HCT116 (cell line): ENCODE measurements at regions of chr11 and their contacts with region 1.

Region 1: GRCh38 chr11:44286268-44286880 is 23.6 kb downstream of the ALX4 start:
- DNase-seq: peak; percentile 43
- ATAC-seq: peak; percentile 94
- H3K4me3 ChIP-seq: no peak overlapping the region
- H3K27ac ChIP-seq: no peak overlapping the region
- H3K4me1 ChIP-seq: no peaks in the 10 kb centered on the region; a peak in 1 of 4 replicates
- H3K27me3 ChIP-seq: no peaks in the 10 kb centered on the region
- CTCF ChIP-seq: peak; percentile 85 to 96 (median 95)
- POLR2A ChIP-seq: no peak
- RAD21 ChIP-seq: peak; percentile 90

Region 2: GRCh38 chr11:43825217-43825816 is 461.1 kb before region 1 on chr11:
- CTCF ChIA-PET with region 1: no interaction called
- POLR2A ChIA-PET with region 1: no interaction called
- RAD21 ChIA-PET with region 1: no interaction called
- intact Hi-C with region 1: no loop called
- DNase-seq: peak; percentile 31
- ATAC-seq: peak; percentile 67
- H3K4me3 ChIP-seq: no peak overlapping the region
- H3K27ac ChIP-seq: no peak overlapping the region
- H3K4me1 ChIP-seq: peaks cover 10% of the 10 kb centered on the region in 2 experiments
- H3K27me3 ChIP-seq: no peaks in the 10 kb centered on the region
- CTCF ChIP-seq: peak; percentile 58 to 83 (median 75); a peak in 5 of 6 replicates
- POLR2A ChIP-seq: no peak
- RAD21 ChIP-seq: peak; percentile 73

Region 3: DNA sequence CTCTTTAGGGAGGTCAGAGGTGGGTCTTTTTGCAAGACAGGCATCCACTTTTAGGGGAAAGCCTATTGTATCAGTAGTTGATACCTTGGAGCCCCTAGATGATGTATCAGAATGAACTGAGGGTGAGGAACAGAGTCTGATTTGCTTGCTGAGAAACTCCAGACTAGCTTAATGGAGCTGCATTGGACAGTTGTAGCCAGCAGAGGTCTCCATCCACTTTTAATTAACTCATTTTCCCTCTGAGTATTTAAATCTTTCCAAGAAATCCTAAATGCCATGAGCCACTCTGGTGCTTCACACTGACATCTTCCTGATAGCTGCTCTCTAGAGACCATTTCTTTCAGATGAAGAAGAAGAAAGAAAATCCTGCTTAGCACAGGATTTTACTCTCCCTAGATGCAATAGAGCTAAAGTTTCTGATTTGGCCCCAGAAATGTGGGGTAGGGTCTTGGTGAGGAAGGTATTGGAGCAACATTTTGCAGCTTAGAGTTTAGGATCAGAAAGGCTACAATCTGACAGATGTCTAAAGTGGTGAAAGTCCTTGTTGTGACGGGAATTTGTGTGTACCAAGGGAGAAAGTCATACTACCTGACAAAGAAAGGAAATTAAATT is 152.9 kb before region 1 on chr11:
- CTCF ChIA-PET with region 1: no interaction called
- POLR2A ChIA-PET with region 1: no interaction called
- RAD21 ChIA-PET with region 1: interaction called in 1 of 2 experiments, 4 read pairs
- intact Hi-C with region 1: loop called (anchors 10 kb)
- DNase-seq: no peak
- ATAC-seq: peak; percentile 76
- H3K4me3 ChIP-seq: no peak overlapping the region
- H3K27ac ChIP-seq: no peak overlapping the region
- H3K4me1 ChIP-seq: no peaks in the 10 kb centered on the region
- H3K27me3 ChIP-seq: no peaks in the 10 kb centered on the region
- CTCF ChIP-seq: peak; percentile 36 to 67 (median 64); a peak in 5 of 6 replicates
- POLR2A ChIP-seq: no peak
- RAD21 ChIP-seq: peak; percentile 58

Region 4: GRCh38 chr11:44372989-44373388 is 86.6 kb after region 1 on chr11:
- CTCF ChIA-PET with region 1: no interaction called
- POLR2A ChIA-PET with region 1: no interaction called
- RAD21 ChIA-PET with region 1: no interaction called
- intact Hi-C with region 1: no loop called
- DNase-seq: no peak
- ATAC-seq: peak; percentile 86
- H3K4me3 ChIP-seq: no peak overlapping the region
- H3K27ac ChIP-seq: no peak overlapping the region
- H3K4me1 ChIP-seq: no peaks in the 10 kb centered on the region
- H3K27me3 ChIP-seq: no peaks in the 10 kb centered on the region
- CTCF ChIP-seq: no peak
- POLR2A ChIP-seq: no peak
- RAD21 ChIP-seq: no peak

Region 5: DNA sequence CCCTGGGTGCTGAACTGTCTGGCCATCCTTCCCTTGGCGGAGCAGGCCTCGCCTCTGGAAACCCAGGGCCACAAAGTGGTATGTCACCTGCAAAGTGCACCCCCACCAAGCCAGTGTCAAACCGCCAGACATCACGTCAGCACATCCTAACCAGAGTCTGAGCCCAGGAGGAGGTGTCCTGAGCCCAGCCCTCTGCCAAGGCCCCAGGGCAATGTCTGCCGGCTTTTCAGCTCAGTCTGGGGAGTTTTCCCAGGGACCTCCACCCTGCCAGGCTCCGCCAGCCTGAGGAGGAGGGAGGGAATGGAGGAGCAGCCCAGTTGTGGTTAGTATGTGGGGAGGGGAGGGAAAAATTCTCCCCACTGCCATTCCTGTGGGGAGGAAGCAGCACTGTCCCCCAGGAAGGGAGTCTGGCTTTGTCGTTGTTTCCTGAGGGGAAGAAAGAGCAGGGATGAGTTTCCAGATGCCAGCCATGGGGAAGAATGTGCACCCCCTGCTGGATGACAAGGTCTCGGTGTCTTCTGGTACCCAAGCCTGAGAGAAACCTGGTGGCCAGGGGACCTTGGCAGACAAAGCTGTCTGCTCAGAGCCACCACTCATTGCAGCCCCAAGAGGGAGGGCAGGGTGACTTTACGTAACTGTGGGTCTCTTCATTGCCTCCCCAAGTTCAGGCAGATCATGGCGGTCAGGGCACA is 197.7 kb after region 1 on chr11:
- CTCF ChIA-PET with region 1: no interaction called
- POLR2A ChIA-PET with region 1: no interaction called
- RAD21 ChIA-PET with region 1: no interaction called
- intact Hi-C with region 1: loop called (anchors 1 kb)
- DNase-seq: peak; percentile 8
- ATAC-seq: peak; percentile 84
- H3K4me3 ChIP-seq: no peak overlapping the region
- H3K27ac ChIP-seq: no peak overlapping the region
- H3K4me1 ChIP-seq: no peaks in the 10 kb centered on the region
- H3K27me3 ChIP-seq: no peaks in the 10 kb centered on the region
- CTCF ChIP-seq: peak; percentile 19 to 58 (median 47); a peak in 4 of 6 replicates
- POLR2A ChIP-seq: no peak
- RAD21 ChIP-seq: peak; percentile 40